ENCODE measurements at regions of chr19 and their contacts with region 1.

Region 1: DNA sequence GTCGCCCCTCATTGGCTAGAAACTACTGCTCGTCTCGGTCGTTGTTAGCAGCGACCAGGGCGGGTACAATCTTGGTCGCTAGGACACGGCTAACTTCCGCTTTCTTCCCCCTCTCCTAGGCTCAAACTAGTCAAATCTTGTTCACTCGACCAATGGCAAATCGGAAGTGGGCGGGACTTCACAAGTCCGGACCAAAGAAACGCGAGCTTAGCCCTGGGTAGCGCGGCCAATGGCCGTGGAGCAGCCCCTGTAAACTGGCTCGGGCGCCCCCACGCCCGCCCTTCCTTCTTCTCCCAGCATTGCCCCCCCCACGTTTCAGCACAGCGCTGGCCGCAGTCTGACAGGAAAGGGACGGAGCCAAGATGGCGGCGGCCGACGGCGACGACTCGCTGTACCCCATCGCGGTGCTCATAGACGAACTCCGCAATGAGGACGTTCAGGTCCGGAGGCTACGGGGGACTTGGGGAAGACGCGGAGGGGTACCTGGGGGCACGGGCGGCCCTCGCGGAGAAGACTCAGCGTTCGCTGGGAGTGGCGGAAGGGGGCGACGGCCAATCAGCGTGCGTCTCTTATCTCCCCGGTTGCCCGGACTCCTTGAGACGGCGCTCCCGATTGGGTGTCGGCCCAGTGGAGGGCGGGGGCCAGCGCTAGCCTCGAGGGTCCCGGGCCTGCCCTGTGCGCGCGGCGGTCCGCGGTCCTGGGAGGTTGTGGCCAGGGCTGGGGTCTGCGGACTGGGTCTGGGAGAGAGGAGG is at the start of gene PPP2R1A:
- DNase-seq: peak; percentile 97 to 100
- ATAC-seq: peak; percentile 96
- H3K4me3 ChIP-seq: peak within 1 kb of the TSS; percentile 80
- H3K27ac ChIP-seq: peak within 1 kb of the TSS; percentile 88 to 94
- H3K4me1 ChIP-seq: 0 out of 3 replicates have a peak, but pooled peaks cover 7% of the 10 kb centered on the region
- CTCF ChIP-seq: no peak
- EP300 ChIP-seq: no peak
- POLR2A ChIP-seq: peak; percentile 64
- RAD21 ChIP-seq: no peak
- polyA plus RNA-seq, gene PPP2R1A: 145 and 201 TPM in 2 replicates

Region 2: DNA sequence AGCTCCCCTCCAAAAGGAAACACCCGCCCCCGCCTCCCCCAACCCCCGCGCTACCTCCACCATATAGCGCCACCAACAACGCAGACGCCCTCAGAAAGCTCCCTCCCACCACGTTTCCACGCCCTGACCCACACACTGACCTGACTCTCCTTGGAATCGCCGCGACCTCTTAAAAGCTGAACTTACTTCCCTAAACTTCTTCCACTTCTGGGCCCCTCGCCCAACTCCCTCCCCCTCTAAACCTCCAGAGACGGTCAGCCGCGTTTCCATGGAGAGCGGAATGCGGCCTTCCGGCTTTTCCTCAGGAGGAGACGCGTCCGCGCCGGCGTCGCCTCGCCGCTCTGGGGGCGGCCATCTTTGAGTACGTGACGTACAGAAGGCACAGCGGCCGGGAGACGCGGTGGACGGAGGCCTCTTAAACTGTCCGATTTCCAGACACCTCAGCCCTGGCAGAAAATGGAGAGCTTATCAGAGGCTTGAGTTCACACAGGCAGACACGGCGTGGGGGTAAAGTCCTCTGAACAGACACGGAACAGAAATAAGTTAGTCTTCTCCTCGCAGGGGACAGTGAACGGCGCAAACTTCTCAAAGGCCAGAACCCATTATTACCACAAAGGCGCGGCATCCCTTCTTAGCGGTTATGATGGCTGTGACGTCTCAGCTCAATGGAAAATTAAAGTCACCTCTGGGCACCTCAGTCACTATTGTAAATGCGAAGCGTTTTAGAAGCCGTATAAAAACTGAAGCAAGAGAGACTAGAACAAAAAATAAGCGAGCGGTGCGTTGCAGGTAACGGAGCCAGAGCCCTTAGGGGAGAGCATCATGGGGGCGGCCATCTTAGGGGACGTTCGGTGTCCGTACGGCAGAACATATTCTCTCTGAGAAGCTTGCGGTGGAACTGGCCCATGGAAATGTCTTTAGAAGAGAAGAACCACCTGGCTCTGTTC is 141.1 kb before region 1 on chr19 and contains the start of gene ZNF432:
- CTCF ChIA-PET with region 1: no interaction called
- POLR2A ChIA-PET with region 1: interaction called, 11 read pairs
- DNase-seq: peak; percentile 72 to 96
- ATAC-seq: peak; percentile 99 to 100
- H3K4me3 ChIP-seq: peak within 1 kb of the TSS; percentile 48
- H3K27ac ChIP-seq: peak within 1 kb of the TSS; percentile 80 to 88
- H3K4me1 ChIP-seq: no peaks in the 10 kb centered on the region
- CTCF ChIP-seq: no peak
- EP300 ChIP-seq: no peak
- POLR2A ChIP-seq: peak; percentile 40; the same call in 1 of the 2 replicates
- RAD21 ChIP-seq: no peak
- polyA plus RNA-seq, gene ZNF432: 2.6 and 3.8 TPM in 2 replicates

Region 3: GRCh38 chr19:52110737-52111136 is 79.2 kb before region 1 on chr19:
- CTCF ChIA-PET with region 1: no interaction called
- POLR2A ChIA-PET with region 1: no interaction called
- DNase-seq: no peak
- ATAC-seq: no peak
- H3K4me3 ChIP-seq: no peak overlapping the region
- H3K27ac ChIP-seq: no peak overlapping the region
- H3K4me1 ChIP-seq: no peaks in the 10 kb centered on the region
- CTCF ChIP-seq: no peak
- EP300 ChIP-seq: no peak
- POLR2A ChIP-seq: no peak
- RAD21 ChIP-seq: no peak

Region 4: GRCh38 chr19:52176366-52176970 is 13.4 kb before region 1 on chr19:
- CTCF ChIA-PET with region 1: no interaction called
- POLR2A ChIA-PET with region 1: interaction called, 11 read pairs
- DNase-seq: no peak
- ATAC-seq: no peak
- H3K4me3 ChIP-seq: no peak overlapping the region
- H3K27ac ChIP-seq: no peak overlapping the region
- H3K4me1 ChIP-seq: no peaks in the 10 kb centered on the region
- CTCF ChIP-seq: no peak
- EP300 ChIP-seq: no peak
- POLR2A ChIP-seq: no peak
- RAD21 ChIP-seq: no peak

Region 5: GRCh38 chr19:52206481-52206880 is 16.6 kb after region 1 on chr19:
- CTCF ChIA-PET with region 1: no interaction called
- POLR2A ChIA-PET with region 1: interaction called, 12 read pairs
- DNase-seq: no peak
- ATAC-seq: no peak
- H3K4me3 ChIP-seq: no peak overlapping the region
- H3K27ac ChIP-seq: no peak overlapping the region
- H3K4me1 ChIP-seq: no peaks in the 10 kb centered on the region
- CTCF ChIP-seq: no peak
- EP300 ChIP-seq: no peak
- POLR2A ChIP-seq: no peak
- RAD21 ChIP-seq: no peak

Region 6: GRCh38 chr19:52269338-52270261 is 79.7 kb after region 1 on chr19 and contains the start of gene ZNF766:
- CTCF ChIA-PET with region 1: no interaction called
- POLR2A ChIA-PET with region 1: interaction called, 11 read pairs
- DNase-seq: peak; percentile 90 to 97
- ATAC-seq: peak; percentile 99 to 100
- H3K4me3 ChIP-seq: peak within 1 kb of the TSS; percentile 69
- H3K27ac ChIP-seq: peak within 1 kb of the TSS; percentile 89 to 96
- H3K4me1 ChIP-seq: no peaks in the 10 kb centered on the region
- CTCF ChIP-seq: no peak
- EP300 ChIP-seq: no peak
- POLR2A ChIP-seq: peak; percentile 57
- RAD21 ChIP-seq: no peak; a peak in 1 of 5 replicates
- polyA plus RNA-seq, gene ZNF766: 19.3 and 21.9 TPM in 2 replicates

Region 7: GRCh38 chr19:52351511-52351910 is 161.6 kb after region 1 on chr19:
- CTCF ChIA-PET with region 1: no interaction called
- POLR2A ChIA-PET with region 1: no interaction called
- DNase-seq: no peak
- ATAC-seq: no peak
- H3K4me3 ChIP-seq: no peak overlapping the region
- H3K27ac ChIP-seq: no peak overlapping the region
- H3K4me1 ChIP-seq: no peaks in the 10 kb centered on the region
- CTCF ChIP-seq: no peak
- EP300 ChIP-seq: no peak
- POLR2A ChIP-seq: no peak
- RAD21 ChIP-seq: no peak

Region 8: GRCh38 chr19:53394974-53395839 is 1205.3 kb after region 1 on chr19 and contains the start of gene ZNF765:
- CTCF ChIA-PET with region 1: no interaction called
- POLR2A ChIA-PET with region 1: interaction called, 12 read pairs
- DNase-seq: peak; percentile 73 to 93
- ATAC-seq: peak; percentile 98 to 99
- H3K4me3 ChIP-seq: peak within 1 kb of the TSS; percentile 99
- H3K27ac ChIP-seq: peak within 1 kb of the TSS; percentile 80 to 85
- H3K4me1 ChIP-seq: no peaks in the 10 kb centered on the region
- CTCF ChIP-seq: peak; percentile 22; the same call in 2 of the 3 replicates
- EP300 ChIP-seq: no peak
- POLR2A ChIP-seq: peak; percentile 74
- RAD21 ChIP-seq: no peak
- polyA plus RNA-seq, gene ZNF765: 8.3 and 9.0 TPM in 2 replicates

Measured in A549 (cell line).